A549 (cell line): ENCODE measurements at regions of chr11 and their contacts with region 1.

Region 1: DNA sequence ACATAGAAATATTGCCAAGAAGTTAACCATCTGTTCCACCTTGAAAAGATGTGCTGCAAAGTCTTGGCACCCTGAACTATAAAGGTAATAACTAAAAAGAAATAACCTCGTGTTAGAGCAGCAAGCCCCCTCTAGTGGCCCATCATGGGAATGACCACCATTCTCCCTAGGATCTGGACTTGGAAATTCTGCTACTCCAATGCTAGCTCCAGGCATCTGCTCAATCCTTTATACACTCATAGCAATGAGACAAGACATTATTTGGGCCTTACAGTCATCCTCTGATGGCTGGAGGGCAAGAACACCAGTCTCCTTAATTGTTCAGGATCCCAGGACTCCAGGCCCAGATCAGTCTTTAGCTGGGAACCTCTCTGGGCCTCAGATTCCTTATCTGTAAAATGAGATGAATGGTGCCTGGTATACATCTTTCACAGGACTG is 76.0 kb downstream of the CWC15 start:
- DNase-seq: peak; percentile 10 to 42
- ATAC-seq: peak in 1 of 2 experiments; percentile 65; a peak in 3 of 6 replicates
- H3K4me3 ChIP-seq: no peak overlapping the region
- H3K27ac ChIP-seq: no peak overlapping the region
- H3K4me1 ChIP-seq: no peaks in the 10 kb centered on the region
- CTCF ChIP-seq: peak; percentile 75
- EP300 ChIP-seq: no peak
- POLR2A ChIP-seq: no peak
- RAD21 ChIP-seq: peak; percentile 80

Region 2: GRCh38 chr11:94885133-94885532 is 12.2 kb before region 1 on chr11:
- CTCF ChIA-PET with region 1: interaction called, 19 read pairs
- POLR2A ChIA-PET with region 1: no interaction called
- DNase-seq: no peak
- ATAC-seq: no peak
- H3K4me3 ChIP-seq: no peak overlapping the region
- H3K27ac ChIP-seq: no peak overlapping the region
- H3K4me1 ChIP-seq: peaks cover 9% of the 10 kb centered on the region
- CTCF ChIP-seq: no peak
- EP300 ChIP-seq: no peak
- POLR2A ChIP-seq: no peak
- RAD21 ChIP-seq: no peak

Region 3: DNA sequence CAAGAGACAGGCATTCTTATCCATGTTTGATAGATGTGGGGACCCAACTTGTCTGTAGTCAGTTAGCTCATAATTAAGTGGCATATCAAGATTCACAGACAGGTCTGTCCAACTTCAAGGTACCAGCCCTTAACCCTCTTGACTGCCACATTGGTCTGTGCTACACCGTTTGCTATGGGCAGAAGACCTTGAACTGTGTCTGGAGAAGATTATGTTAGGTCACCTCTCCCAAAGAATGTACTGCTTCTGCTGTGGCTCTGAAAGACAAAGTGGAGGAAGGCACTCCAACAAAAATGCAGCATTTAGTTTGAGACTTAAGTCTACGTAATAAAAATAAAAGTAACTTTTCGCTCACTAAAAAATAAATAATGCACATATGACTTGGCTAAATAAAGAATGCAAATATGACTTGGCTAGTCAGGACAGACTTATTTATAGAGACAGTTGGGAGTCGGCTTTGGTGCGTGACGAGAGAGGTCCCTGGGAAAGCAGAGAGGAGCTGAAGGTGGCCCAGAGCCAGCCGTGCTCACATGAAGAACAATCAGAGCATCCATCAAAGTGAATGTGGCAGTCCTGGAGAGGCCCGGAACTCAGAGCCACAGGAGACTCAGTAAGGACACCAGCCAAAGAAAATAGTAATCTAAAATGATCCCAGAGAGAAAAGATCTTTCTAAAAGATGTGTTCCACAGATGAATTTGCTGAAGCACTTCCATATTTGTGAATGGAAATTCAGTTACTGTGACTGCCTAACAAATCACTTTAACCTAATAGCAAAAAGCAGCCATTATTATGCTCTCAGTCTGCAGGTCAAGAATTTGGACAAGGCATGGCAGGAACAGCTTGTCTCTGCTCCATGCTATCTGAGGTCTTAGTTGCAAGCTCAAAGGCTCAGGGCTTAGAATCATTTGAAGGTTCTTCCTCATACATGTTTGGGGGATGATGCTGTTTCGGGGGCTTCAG is 41.0 kb after region 1 on chr11:
- CTCF ChIA-PET with region 1: no interaction called
- POLR2A ChIA-PET with region 1: no interaction called
- DNase-seq: no peak
- ATAC-seq: no peak
- H3K4me3 ChIP-seq: no peak overlapping the region
- H3K27ac ChIP-seq: no peak overlapping the region
- H3K4me1 ChIP-seq: no peaks in the 10 kb centered on the region
- CTCF ChIP-seq: no peak
- EP300 ChIP-seq: no peak
- POLR2A ChIP-seq: no peak
- RAD21 ChIP-seq: no peak